ENCODE measurements at regions of chr5 and their contacts with region 1.

Region 1: DNA sequence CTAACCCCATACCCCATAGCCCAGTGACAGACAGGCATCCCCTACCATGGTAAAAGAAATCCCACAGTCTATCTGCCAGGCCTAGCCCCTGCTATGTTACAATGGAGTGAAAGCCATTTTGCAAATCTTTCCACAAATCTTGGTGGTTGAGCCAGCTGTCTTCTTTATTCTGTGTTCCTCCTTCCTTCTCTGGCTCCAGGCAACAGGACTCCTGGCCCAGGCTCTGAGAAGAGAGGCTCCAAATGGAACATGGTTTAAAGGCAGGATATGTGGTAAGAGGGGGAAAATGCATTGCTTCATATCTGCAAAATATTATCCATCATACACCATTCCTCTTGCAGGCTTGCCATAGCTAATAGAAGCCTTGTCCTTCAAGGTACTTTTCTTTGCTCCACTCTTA is 25.2 kb downstream of the FGF1 start:
- DNase-seq: no peak
- ATAC-seq: no peak
- H3K4me3 ChIP-seq: no peak overlapping the region
- H3K27ac ChIP-seq: no peak overlapping the region
- H3K4me1 ChIP-seq: no peaks in the 10 kb centered on the region
- H3K27me3 ChIP-seq: no peaks in the 10 kb centered on the region
- CTCF ChIP-seq: no peak
- POLR2A ChIP-seq: no peak

Region 2: GRCh38 chr5:142699184-142699720 is 38.5 kb after region 1 on chr5:
- intact Hi-C with region 1: loop called in 1 of 2 experiments (anchors 5 kb)
- DNase-seq: peak; percentile 76 to 85 (median 77)
- ATAC-seq: peak; percentile 98 to 99 (median 98)
- H3K4me3 ChIP-seq: no peak overlapping the region
- H3K27ac ChIP-seq: no peak overlapping the region
- H3K4me1 ChIP-seq: peaks cover 0 to 3% (median 0%) of the 10 kb centered on the region in 4 donors
- H3K27me3 ChIP-seq: no peaks in the 10 kb centered on the region
- CTCF ChIP-seq: peak; percentile 95 to 98 (median 96)
- POLR2A ChIP-seq: no peak

Measured in right lobe of liver (tissue), 6 donors.